ENCODE measurements at regions of chr4 and their contacts with region 1.

Region 1: GRCh38 chr4:155758481-155759404 is at the start of gene GUCY1B1:
- DNase-seq: peak; percentile 55
- H3K4me3 Mint-ChIP-seq: peak within 1 kb of the TSS; percentile 22
- H3K27ac Mint-ChIP-seq: no peak within 1 kb of the TSS
- H3K4me1 Mint-ChIP-seq: peaks cover 5% of the 10 kb centered on the region
- H3K27me3 Mint-ChIP-seq: peaks cover 16% of the 10 kb centered on the region
- total RNA-seq, gene GUCY1B1: 0.26 and 0.29 TPM in 2 replicates

Region 2: DNA sequence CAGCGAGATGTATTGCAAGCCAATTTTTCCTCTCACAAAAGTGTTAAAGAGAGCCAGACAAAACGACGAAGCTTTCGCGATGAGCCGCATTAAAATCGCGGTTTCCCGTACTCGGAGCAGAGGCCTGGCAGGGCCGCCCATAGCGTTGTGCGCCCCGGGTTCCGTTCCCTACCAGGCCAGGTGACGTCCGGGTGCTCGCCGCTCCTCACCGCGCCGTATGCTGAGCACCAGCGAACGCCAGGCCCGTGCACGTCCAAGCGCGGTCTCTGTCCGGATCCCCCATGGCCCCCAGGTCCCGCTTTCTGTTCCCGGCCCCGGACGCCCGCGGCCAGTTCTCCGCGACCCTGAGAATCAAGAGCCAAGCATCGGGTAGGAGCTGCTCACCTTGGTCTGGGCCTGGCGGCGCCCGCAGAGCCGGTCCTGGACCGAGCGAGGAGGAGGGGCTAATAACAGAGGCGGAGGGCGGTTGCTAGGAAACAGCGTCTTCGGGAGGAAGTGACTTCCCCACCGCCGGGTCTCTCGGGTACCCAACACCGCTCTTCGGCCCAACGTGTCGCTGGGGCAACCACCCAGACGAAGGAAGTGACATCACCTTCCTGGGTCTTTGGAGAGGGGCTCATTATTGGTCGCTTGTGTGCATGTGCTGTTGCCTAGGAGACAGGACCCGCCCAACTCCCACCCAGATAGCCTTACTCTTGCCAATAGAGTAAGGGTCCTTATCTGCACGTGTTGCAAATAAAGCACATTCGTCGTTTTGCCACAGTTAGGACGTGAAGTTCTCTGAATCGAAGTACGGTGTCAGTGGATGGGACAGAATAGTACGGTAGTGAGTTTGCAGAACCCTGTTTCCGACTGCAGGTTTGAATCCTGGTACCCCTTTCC is 382.1 kb before region 1 on chr4 and contains the start of gene MAP9:
- intact Hi-C with region 1: loop called (anchors 2 kb)
- DNase-seq: peak; percentile 82
- H3K4me3 Mint-ChIP-seq: peak within 1 kb of the TSS; percentile 82
- H3K27ac Mint-ChIP-seq: peak within 1 kb of the TSS; percentile 60
- H3K4me1 Mint-ChIP-seq: peaks cover 19% of the 10 kb centered on the region
- H3K27me3 Mint-ChIP-seq: peaks cover 4% of the 10 kb centered on the region
- total RNA-seq, gene MAP9: 5.9 and 6.2 TPM in 2 replicates

Measured in activated T-helper 1 cell treated with anti-CD3 and anti-CD28 coated beads, Interleukin-12 subunit alpha, Interleukin-12 subunit beta, Interleukin-2, Interleukin-4 antibody, amounts not matched to agents 30 ng/mL and 10 ng/mL and 1 ng/mL, durations not matched to agents 14 hours and 24 hours and 36 hours (primary cell).